Left lung (tissue), 14 donors: ENCODE measurements at regions of chr15 and their contacts with region 1.

Region 1: GRCh38 chr15:81274931-81275707 is 48.8 kb downstream of the STARD5 start:
- DNase-seq: peak; percentile 46 to 90 (median 80)
- ATAC-seq: peak; percentile 97
- H3K4me3 ChIP-seq: no peak overlapping the region
- H3K27ac ChIP-seq: peak overlapping the region in 1 of 2 donors; percentile 19
- H3K4me1 ChIP-seq: peaks cover 3 to 5% of the 10 kb centered on the region in 2 donors
- H3K27me3 ChIP-seq: no peaks in the 10 kb centered on the region
- CTCF ChIP-seq: peak; percentile 67 to 89

Region 2: DNA sequence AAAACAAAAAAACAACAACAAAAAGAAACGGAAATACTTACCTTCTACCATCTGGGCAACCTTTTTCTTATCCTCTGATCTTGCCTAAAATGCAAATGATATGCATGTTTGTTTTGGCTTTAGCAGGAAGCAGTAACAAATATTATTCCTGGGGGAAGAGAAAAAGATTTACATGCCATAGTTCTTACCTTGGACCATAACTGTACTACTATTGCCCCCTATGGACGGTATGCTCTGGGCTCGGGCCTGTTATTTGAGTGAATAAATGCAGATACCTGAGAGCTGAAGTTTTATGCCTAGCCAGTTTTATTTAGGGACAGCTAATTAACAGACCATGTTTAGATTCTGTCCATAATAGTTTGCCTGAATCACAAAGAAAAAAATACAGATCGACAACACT is 61.4 kb after region 1 on chr15:
- intact Hi-C with region 1: loop called in 1 of 2 experiments (anchors 5 kb)
- DNase-seq: no peak
- ATAC-seq: no peak
- H3K4me3 ChIP-seq: no peak overlapping the region
- H3K27ac ChIP-seq: no peak overlapping the region
- H3K4me1 ChIP-seq: peaks cover 9 to 11% of the 10 kb centered on the region in 2 donors
- H3K27me3 ChIP-seq: no peaks in the 10 kb centered on the region
- CTCF ChIP-seq: peak in 1 of 2 donors; percentile 11

Region 3: DNA sequence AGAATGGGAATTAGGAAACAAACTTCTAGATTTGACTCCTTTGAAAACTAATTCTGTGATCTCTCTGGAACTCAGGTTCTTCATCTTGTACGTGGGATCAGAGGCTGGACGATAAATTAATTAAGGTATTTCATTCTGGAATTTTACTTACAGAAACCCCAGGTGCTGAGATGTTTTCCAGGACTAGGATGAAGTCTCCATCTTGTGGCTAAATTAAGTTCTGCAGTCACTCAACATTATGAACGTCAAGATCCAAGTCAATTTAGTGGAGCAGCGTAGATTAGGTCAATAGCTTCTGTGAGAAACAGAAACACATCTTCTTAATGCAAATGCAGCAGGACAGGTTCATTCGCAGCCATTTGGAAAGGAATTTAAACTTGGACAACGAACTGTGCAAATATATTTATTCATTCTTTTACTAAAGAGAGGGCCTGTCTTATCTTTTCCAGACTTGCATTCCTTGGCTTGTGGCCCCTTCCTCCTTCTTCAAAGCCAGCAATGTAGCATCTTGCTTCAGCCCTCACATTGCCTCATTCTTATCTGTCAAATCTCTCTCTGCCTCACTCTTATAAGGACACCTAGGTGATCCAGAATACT is 125.6 kb after region 1 on chr15:
- intact Hi-C with region 1: loop called (anchors 5 to 10 kb)
- DNase-seq: peak in 2 of 4 donors; percentile 18 to 25
- ATAC-seq: peak; percentile 75
- H3K4me3 ChIP-seq: no peak overlapping the region
- H3K27ac ChIP-seq: no peak overlapping the region
- H3K4me1 ChIP-seq: no peaks in the 10 kb centered on the region
- H3K27me3 ChIP-seq: no peaks in the 10 kb centered on the region
- CTCF ChIP-seq: peak; percentile 65 to 79

Region 4: DNA sequence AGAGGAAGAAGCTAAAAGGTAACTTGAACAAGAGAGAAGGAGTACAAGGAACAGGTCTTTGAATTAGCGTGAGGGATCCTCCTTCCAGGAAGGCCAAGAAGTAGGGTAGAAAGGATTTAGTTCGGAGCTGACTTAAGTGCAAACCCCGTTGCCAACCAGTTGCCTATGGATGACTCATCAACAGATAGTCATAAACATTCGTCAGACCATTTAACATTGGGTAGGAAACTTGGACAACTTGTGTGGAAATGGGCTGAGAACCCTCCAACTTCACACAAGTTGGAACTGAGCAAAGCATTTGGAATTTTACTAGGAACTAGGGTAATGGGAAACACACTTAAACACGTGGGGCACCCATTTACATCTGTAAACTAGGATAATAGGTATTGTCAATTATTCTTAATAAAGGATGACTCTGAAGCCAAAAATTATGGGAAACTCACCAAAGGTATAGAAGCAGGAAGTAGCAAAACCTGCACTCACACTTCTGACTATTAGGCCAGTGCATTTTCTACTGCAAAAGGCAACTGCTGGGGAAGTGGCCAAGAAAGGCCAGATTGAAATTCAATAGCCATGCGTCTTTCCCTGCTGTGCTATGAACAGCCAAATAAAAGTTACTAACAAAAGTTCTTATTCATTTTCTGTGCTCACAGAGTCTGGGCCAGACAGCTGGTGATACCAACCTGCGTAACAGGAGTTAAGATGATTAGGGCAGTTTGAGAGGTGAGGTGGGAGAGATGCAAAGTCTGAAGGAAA is 273.4 kb after region 1 on chr15:
- intact Hi-C with region 1: no loop called
- DNase-seq: no peak
- ATAC-seq: no peak
- H3K4me3 ChIP-seq: no peak overlapping the region
- H3K27ac ChIP-seq: no peak overlapping the region
- H3K4me1 ChIP-seq: no peaks in the 10 kb centered on the region
- H3K27me3 ChIP-seq: peaks cover 0 to 14% of the 10 kb centered on the region in 2 donors
- CTCF ChIP-seq: no peak